CD4-positive, alpha-beta memory T cell (primary cell): ENCODE measurements at regions of chr6 and their contacts with region 1.

Region 1: DNA sequence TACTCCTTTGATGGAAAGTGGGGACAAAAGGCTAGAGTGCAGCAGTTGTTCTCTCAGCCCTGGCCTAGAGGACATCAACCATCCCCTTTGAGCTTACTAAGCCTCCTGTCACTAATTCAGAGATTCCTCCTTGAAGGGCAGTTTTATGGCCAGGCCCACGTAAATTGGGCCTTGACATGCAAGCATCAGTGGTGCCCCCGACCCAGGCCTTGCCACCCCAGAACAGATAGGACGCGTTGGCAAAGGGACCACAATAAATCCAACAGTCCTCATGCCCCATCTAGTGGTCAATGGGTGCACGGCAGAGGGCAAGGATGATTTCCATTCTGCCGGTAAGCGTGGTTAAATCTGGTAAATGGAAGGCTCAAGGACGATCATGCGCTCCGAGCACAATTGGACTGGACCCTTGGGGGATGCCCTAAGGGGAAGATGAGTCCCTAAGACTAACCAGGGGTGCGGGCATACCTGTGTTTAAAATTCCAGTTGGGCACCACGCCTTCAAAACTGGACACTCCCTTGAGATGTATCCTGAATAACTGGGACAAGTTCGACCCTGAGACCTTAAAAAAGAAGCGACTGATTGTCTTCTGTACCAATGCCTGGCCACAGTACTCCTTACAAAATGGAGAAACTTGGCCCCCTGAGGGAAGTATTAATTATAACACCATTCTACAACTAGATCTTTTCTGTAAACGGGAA is 32.6 kb downstream of the CEP85L start:
- DNase-seq: peak; percentile 54 to 62 (median 57)
- H3K4me3 ChIP-seq: no peak overlapping the region
- H3K4me3 Mint-ChIP-seq: peak overlapping the region in 4 of 8 donors; percentile 8 to 59 (median 42)
- H3K27ac ChIP-seq: no peak overlapping the region
- H3K27ac Mint-ChIP-seq: peak overlapping the region in 6 of 7 donors; percentile 79 to 93 (median 84)
- H3K4me1 ChIP-seq: peaks cover 22% of the 10 kb centered on the region
- H3K4me1 Mint-ChIP-seq: peaks cover 41 to 72% (median 54%) of the 10 kb centered on the region in 4 donors
- H3K27me3 ChIP-seq: no peaks in the 10 kb centered on the region
- H3K27me3 Mint-ChIP-seq: no peaks in the 10 kb centered on the region

Region 2: DNA sequence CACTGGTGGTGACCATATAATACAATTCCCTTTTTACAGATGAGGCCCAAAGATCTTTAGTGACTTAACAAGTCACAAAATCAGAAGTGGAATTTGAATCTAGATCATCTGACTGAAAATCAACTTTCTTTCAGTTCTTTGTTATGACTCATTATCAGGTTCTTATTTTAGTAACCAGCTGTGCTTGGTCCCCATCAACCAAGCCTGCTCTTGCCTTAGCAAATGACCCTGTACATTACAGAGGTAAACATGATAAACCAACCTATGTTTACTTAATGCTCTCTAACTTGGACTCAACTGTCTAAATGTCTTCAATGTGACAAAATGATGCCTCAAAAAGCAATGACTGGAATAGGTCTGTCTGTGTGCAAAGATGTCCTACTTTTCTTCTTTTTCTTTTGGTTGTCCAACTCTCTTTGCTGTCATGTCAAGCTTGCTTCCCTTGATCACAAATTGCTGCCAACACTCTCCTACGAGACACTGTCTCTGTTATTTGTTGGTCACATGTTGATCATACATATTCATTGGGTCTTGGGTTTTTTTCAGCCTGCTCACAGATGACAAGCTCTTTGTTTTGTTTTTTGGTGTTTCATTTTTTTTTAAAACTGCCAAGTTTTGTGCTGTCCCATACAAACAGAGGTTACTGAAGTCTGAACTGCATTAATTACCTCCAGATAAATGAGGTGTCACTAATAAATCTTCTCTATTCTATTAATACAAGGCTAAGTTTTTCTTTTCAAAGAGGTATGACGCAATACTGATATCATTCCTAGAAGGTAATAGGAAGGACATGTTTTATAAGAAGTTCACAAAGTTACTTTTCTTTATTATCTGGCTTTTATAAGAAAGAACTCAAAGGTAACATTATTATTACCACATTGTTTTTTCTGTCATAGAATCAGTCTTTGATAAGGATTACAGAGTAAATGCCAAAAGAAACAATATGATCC is 133.0 kb before region 1 on chr6:
- CTCF ChIA-PET with region 1: no interaction called
- POLR2A ChIA-PET with region 1: no interaction called
- intact Hi-C with region 1: loop called (anchors 5 kb)
- DNase-seq: no peak
- H3K4me3 ChIP-seq: no peak overlapping the region
- H3K4me3 Mint-ChIP-seq: no peak overlapping the region
- H3K27ac ChIP-seq: no peak overlapping the region
- H3K27ac Mint-ChIP-seq: peak overlapping the region in 1 of 7 donors; percentile 68
- H3K4me1 ChIP-seq: no peaks in the 10 kb centered on the region
- H3K4me1 Mint-ChIP-seq: peaks cover 0 to 3% (median 1%) of the 10 kb centered on the region in 4 donors
- H3K27me3 ChIP-seq: no peaks in the 10 kb centered on the region
- H3K27me3 Mint-ChIP-seq: no peaks in the 10 kb centered on the region

Region 3: DNA sequence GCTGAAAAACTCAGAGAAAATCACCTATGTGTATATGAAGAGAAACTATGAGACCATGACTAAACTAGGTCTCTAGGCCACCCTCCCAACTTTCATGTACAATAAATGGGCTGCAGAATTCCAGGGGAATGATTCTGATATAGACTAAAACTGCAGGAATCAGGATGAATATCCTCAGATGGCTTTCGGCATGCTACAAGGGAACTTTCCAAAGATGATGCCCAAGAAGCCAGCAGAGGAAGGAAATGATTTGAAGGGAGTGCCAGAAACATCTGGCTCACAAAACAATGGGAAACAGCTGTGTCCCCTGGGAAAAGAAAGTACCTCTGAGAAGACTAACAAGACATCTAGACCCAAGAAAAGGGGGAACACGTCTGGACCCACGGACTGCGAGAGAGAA is 29.6 kb before region 1 on chr6:
- CTCF ChIA-PET with region 1: no interaction called
- POLR2A ChIA-PET with region 1: no interaction called
- intact Hi-C with region 1: no loop called
- DNase-seq: no peak
- H3K4me3 ChIP-seq: no peak overlapping the region
- H3K4me3 Mint-ChIP-seq: no peak overlapping the region
- H3K27ac ChIP-seq: no peak overlapping the region
- H3K27ac Mint-ChIP-seq: peak overlapping the region; percentile 9 to 80 (median 60)
- H3K4me1 ChIP-seq: no peaks in the 10 kb centered on the region
- H3K4me1 Mint-ChIP-seq: peaks cover 36 to 68% (median 44%) of the 10 kb centered on the region in 4 donors
- H3K27me3 ChIP-seq: no peaks in the 10 kb centered on the region
- H3K27me3 Mint-ChIP-seq: no peaks in the 10 kb centered on the region

Region 4: GRCh38 chr6:118606268-118606667 is 12.6 kb before region 1 on chr6:
- CTCF ChIA-PET with region 1: interaction called, 15 read pairs
- POLR2A ChIA-PET with region 1: no interaction called
- intact Hi-C with region 1: no loop called
- DNase-seq: no peak
- H3K4me3 ChIP-seq: no peak overlapping the region
- H3K4me3 Mint-ChIP-seq: peak overlapping the region in 3 of 8 donors; percentile 8 to 45 (median 18)
- H3K27ac ChIP-seq: no peak overlapping the region
- H3K27ac Mint-ChIP-seq: peak overlapping the region in 3 of 7 donors; percentile 24 to 73 (median 36)
- H3K4me1 ChIP-seq: peaks cover 20% of the 10 kb centered on the region
- H3K4me1 Mint-ChIP-seq: peaks cover 30 to 54% (median 41%) of the 10 kb centered on the region in 4 donors
- H3K27me3 ChIP-seq: no peaks in the 10 kb centered on the region
- H3K27me3 Mint-ChIP-seq: no peaks in the 10 kb centered on the region